ENCODE measurements at regions of chrX and their contacts with region 1.

Region 1: GRCh38 chrX:24054182-24055042 is at the start of gene EIF2S3:
- DNase-seq: peak; percentile 95 to 98 (median 98)
- H3K4me3 ChIP-seq: peak within 1 kb of the TSS in 4 of 7 experiments; percentile 53 to 98 (median 96)
- H3K27ac ChIP-seq: peak within 1 kb of the TSS in 1 of 2 experiments; percentile 90
- H3K4me1 ChIP-seq: peaks cover 0 to 11% (median 3%) of the 10 kb centered on the region in 4 experiments
- H3K27me3 ChIP-seq: no peaks in the 10 kb centered on the region

Region 2: DNA sequence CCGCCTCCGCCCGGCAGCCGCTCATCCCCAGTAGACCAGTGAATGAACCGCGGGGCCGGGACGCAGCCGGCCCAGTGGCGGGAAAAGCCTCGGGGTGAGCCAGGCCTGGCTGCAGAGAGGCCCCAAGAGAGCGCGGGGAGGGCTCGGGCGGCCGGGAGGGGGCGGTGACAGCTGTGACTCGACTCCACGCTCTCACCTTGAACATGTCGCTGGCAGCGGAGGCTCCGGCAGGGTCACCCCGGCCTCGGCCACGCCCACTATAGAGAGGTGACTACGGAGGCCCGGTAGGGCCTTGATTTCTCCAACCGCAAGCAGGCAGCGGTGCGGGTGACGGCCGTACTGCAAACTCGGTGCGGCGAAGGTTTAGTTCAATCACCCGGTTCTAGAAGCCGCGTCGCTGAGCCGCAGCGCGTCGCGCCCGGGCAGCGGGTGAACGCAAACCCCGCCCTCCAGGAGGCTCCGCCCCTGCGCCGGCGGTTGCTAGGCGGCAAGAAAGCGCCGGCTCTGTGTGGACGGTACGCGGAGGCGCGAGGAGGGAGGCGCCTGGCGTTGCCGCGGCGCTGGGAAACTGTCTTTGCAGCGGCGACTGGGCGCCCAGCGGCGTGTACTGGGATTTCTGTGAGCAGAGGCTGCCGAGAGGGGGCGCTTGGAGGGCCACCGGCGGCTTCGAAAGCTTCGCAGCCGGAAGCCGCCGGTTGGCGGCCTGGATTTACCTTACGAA is 146.8 kb before region 1 on chrX and contains the starts of genes APOO and CXorf58:
- CTCF ChIA-PET with region 1: interaction called, 11 read pairs
- POLR2A ChIA-PET with region 1: interaction called, 9 read pairs
- DNase-seq: peak; percentile 90 to 95 (median 95)
- H3K4me3 ChIP-seq: peak within 1 kb of the TSS; percentile 13 to 81 (median 63)
- H3K27ac ChIP-seq: peak within 1 kb of the TSS; percentile 40 to 84
- H3K4me1 ChIP-seq: peaks cover 0 to 12% (median 5%) of the 10 kb centered on the region in 4 experiments
- H3K27me3 ChIP-seq: peaks cover 0 to 13% (median 0%) of the 10 kb centered on the region in 5 experiments

Region 3: GRCh38 chrX:24024819-24025740 is 29.3 kb before region 1 on chrX:
- CTCF ChIA-PET with region 1: interaction called, 14 read pairs
- POLR2A ChIA-PET with region 1: interaction called, 10 read pairs
- DNase-seq: peak; percentile 88 to 95 (median 93)
- H3K4me3 ChIP-seq: peak overlapping the region; percentile 67 to 97 (median 80)
- H3K27ac ChIP-seq: peak overlapping the region; percentile 80 to 95
- H3K4me1 ChIP-seq: peaks cover 2 to 8% (median 6%) of the 10 kb centered on the region in 4 experiments
- H3K27me3 ChIP-seq: peaks cover 0 to 20% (median 0%) of the 10 kb centered on the region in 5 experiments